GM12878 (cell line): ENCODE measurements at regions of chr9 and their contacts with region 1.

Region 1: DNA sequence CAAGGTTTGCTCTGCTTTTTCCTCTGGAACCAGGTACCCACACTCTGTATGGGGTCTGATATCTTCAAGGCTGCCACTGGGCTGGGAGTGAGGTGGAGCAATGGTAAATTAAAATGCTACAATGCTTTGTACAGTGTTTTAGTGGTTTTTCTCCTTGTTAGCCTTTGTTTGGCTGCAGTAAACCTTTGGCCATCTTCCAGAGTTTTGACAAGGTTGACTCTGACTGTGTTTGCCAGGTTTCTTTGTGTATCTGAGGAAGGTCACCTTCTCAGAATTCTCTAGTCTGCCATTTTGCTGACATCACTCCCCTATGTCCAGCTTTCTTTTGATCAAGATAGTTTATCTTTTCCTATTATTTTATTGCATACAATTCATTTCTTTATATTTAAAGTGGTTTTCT is 11.2 kb downstream of the SPATA31D1 start:
- DNase-seq: no peak
- ATAC-seq: no peak
- H3K4me3 ChIP-seq: no peak overlapping the region
- H3K27ac ChIP-seq: no peak overlapping the region
- H3K4me1 ChIP-seq: no peaks in the 10 kb centered on the region
- H3K27me3 ChIP-seq: no peaks in the 10 kb centered on the region
- CTCF ChIP-seq: no peak
- EP300 ChIP-seq: no peak
- POLR2A ChIP-seq: no peak
- RAD21 ChIP-seq: no peak

Region 2: GRCh38 chr9:81716409-81716808 is 283.4 kb before region 1 on chr9:
- CTCF ChIA-PET with region 1: no interaction called
- POLR2A ChIA-PET with region 1: no interaction called
- RAD21 ChIA-PET with region 1: no interaction called
- SMC1A ChIA-PET with region 1: no interaction called
- in situ Hi-C with region 1: no loop called
- intact Hi-C with region 1: no loop called
- DNase-seq: no peak
- ATAC-seq: no peak
- H3K4me3 ChIP-seq: no peak overlapping the region
- H3K27ac ChIP-seq: no peak overlapping the region
- H3K4me1 ChIP-seq: no peaks in the 10 kb centered on the region
- H3K27me3 ChIP-seq: no peaks in the 10 kb centered on the region
- CTCF ChIP-seq: no peak
- EP300 ChIP-seq: no peak
- POLR2A ChIP-seq: no peak
- RAD21 ChIP-seq: no peak

Region 3: DNA sequence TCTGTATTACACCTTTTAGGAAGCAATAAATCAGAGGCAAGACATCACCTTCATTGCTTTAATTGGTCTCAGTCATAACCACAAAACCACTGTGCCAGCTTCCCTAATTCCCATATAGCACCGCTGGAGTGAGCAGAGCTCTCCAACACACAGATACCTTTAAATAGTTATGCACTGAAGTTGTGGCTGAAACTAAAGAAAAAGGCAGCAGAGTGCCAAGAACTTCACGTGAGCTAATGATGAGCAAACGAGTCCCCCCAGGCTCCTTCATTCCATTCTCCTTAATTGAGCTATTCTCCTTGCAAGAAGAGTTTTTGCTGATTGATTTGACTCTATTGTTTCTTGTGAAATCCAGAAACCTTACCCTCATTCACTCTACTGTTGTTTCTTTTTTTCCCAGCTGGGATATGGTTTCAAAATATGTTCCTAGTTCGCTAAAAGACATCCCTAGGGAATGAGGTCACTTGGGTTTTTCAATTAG is 490.3 kb after region 1 on chr9:
- CTCF ChIA-PET with region 1: no interaction called
- POLR2A ChIA-PET with region 1: no interaction called
- RAD21 ChIA-PET with region 1: no interaction called
- SMC1A ChIA-PET with region 1: no interaction called
- in situ Hi-C with region 1: no loop called
- intact Hi-C with region 1: loop called (anchors 10 kb)
- DNase-seq: no peak
- ATAC-seq: no peak
- H3K4me3 ChIP-seq: no peak overlapping the region
- H3K27ac ChIP-seq: no peak overlapping the region
- H3K4me1 ChIP-seq: no peaks in the 10 kb centered on the region
- H3K27me3 ChIP-seq: no peaks in the 10 kb centered on the region
- CTCF ChIP-seq: no peak
- EP300 ChIP-seq: no peak
- POLR2A ChIP-seq: no peak
- RAD21 ChIP-seq: no peak